GM18951 (cell line): ENCODE measurements at regions of chr2 and their contacts with region 1.

Region 1: GRCh38 chr2:19863303-19864041 is 38.3 kb downstream of the TTC32 start:
- POLR2A ChIP-seq: no peak

Region 2: DNA sequence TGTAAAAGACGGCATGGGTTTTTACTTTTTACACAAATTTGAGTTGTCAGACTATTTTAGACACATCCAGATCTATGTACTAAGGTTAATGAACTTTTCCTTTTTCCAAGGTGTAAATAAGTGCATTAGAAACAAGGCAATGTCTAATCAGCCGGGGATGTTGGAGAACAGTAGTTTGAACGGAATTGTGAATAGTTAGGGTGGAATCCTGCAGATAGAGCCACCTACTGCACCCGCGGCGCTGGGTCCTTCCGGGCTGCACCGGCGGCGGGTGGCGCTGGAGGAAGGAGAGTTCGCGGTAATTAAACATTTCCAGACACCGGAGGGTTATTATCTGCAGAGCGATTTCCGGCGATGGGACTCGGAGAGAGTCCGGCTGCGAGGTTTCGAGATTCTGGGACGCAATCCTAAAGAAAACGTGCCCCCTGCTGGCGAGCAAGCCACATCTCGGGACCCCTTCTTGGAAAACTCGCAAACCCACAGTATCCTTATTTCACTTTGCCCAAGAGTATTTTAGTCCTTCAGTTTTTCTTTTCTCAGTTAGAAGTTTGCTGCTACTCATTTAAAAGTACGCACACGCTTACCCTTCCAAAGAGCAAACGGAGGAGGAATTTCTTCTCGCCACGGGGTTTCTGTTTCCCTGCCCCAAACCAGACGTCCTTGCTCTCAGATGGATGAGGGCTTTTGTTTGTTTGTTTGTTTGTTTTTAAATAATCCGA is 500.6 kb before region 1 on chr2:
- in situ Hi-C with region 1: loop called (anchors 25 kb)
- POLR2A ChIP-seq: no peak